ENCODE measurements at regions of chr10 and their contacts with region 1.

Region 1: DNA sequence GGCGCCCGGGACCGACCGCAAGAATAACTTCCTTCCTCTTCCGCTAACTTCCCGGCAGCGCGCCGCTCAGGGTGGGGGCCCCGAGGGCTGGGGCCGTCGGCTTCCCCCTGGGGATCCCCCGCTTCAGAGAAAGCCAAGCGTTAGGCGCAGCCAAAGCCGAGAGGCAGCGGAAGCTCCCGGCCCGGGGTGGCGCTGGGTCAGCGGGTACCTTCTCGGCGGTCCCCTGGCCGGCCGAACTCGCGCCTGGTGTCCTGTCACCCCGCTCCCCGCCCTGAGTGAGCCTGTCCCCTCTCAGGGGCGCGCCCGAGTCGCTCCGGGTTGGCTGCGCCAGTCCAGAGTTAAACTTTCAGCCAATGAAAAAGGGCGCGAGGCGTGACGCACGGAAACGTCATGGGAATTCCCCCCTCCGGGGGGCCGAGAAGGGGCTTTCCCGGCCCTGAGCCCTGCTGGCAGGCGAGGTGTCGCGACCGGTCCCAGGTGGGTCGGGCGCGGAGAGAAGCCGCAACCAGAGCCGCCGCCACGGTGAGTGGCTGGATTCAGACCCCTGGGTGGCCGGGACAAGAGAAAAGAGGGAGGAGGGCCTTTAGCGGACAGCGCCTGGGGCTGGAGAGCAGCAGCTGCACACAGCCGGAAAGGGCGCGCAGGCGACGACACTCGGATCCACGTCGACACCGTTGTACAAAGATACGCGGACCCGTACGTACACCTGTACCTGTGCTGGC is 1.3 kb upstream of the NFKB2 start:
- DNase-seq: peak; percentile 93
- H3K4me3 ChIP-seq: peak overlapping the region; percentile 4 to 60 (median 53)
- H3K27ac ChIP-seq: peak overlapping the region; percentile 87
- H3K4me1 ChIP-seq: peaks cover 14% of the 10 kb centered on the region
- H3K27me3 ChIP-seq: peaks cover 6% of the 10 kb centered on the region in 2 experiments
- CTCF ChIP-seq: no peak
- POLR2A ChIP-seq: no peak

Region 2: GRCh38 chr10:102101152-102101551 is 293.1 kb before region 1 on chr10:
- CTCF ChIA-PET with region 1: no interaction called
- POLR2A ChIA-PET with region 1: no interaction called
- dilution Hi-C with region 1: no loop called
- intact Hi-C with region 1: no loop called
- DNase-seq: no peak
- H3K4me3 ChIP-seq: no peak overlapping the region
- H3K27ac ChIP-seq: no peak overlapping the region
- H3K4me1 ChIP-seq: peaks cover 9% of the 10 kb centered on the region
- H3K27me3 ChIP-seq: no peaks in the 10 kb centered on the region
- CTCF ChIP-seq: no peak
- POLR2A ChIP-seq: no peak

Region 3: GRCh38 chr10:102151774-102152544 is 242.3 kb before region 1 on chr10 and contains the start of gene NOLC1:
- CTCF ChIA-PET with region 1: interaction called, 3 read pairs
- POLR2A ChIA-PET with region 1: no interaction called
- dilution Hi-C with region 1: no loop called
- intact Hi-C with region 1: loop called (anchors 1 kb)
- DNase-seq: peak; percentile 99
- H3K4me3 ChIP-seq: peak within 1 kb of the TSS; percentile 24 to 71 (median 66)
- H3K27ac ChIP-seq: peak within 1 kb of the TSS; percentile 80
- H3K4me1 ChIP-seq: peaks cover 17% of the 10 kb centered on the region
- H3K27me3 ChIP-seq: no peaks in the 10 kb centered on the region
- CTCF ChIP-seq: no peak
- POLR2A ChIP-seq: peak; percentile 97
- total RNA-seq, gene NOLC1: 68.2 and 73.1 TPM in 2 replicates

Region 4: DNA sequence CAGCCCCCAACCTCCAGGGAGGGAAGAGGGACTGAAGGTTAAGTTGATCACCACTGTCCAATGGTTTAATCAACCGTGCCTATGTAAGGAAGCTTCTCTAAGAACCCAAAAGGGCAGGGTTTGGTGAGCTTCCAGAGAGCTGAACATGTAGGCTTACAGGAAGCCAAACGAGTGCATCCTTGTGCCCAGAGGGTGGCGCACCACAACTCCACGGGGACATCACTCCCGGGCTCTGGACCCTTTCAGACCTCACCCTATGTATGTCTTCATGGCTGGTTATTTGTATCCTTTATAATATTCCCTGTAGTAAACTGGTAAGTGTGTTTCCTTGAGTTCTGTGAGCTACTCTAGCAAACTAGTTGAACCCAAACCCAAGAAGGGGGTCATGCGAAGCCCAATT is 10.2 kb before region 1 on chr10:
- CTCF ChIA-PET with region 1: interaction called, 30 read pairs
- POLR2A ChIA-PET with region 1: interaction called, 3 read pairs
- dilution Hi-C with region 1: no loop called
- intact Hi-C with region 1: no loop called
- DNase-seq: no peak
- H3K4me3 ChIP-seq: no peak overlapping the region
- H3K27ac ChIP-seq: no peak overlapping the region
- H3K4me1 ChIP-seq: no peaks in the 10 kb centered on the region
- H3K27me3 ChIP-seq: no peaks in the 10 kb centered on the region
- CTCF ChIP-seq: peak in 1 of 2 donors; percentile 7
- POLR2A ChIP-seq: no peak

Region 5: GRCh38 chr10:102484021-102484420 is 89.8 kb after region 1 on chr10:
- CTCF ChIA-PET with region 1: interaction called, 23 read pairs
- POLR2A ChIA-PET with region 1: no interaction called
- dilution Hi-C with region 1: no loop called
- intact Hi-C with region 1: loop called (anchors 1 kb)
- DNase-seq: no peak
- H3K4me3 ChIP-seq: no peak overlapping the region
- H3K27ac ChIP-seq: no peak overlapping the region
- H3K4me1 ChIP-seq: no peaks in the 10 kb centered on the region
- H3K27me3 ChIP-seq: no peaks in the 10 kb centered on the region
- CTCF ChIP-seq: no peak
- POLR2A ChIP-seq: no peak

Region 6: GRCh38 chr10:102713814-102714620 is 319.8 kb after region 1 on chr10 and contains the start of gene ARL3:
- CTCF ChIA-PET with region 1: no interaction called
- POLR2A ChIA-PET with region 1: no interaction called
- dilution Hi-C with region 1: no loop called
- intact Hi-C with region 1: loop called (anchors 2 kb)
- DNase-seq: peak; percentile 99
- H3K4me3 ChIP-seq: peak within 1 kb of the TSS; percentile 64 to 85 (median 85)
- H3K27ac ChIP-seq: peak within 1 kb of the TSS; percentile 38
- H3K4me1 ChIP-seq: peaks cover 23% of the 10 kb centered on the region
- H3K27me3 ChIP-seq: no peaks in the 10 kb centered on the region
- CTCF ChIP-seq: peak; percentile 39 to 78
- POLR2A ChIP-seq: peak; percentile 76
- total RNA-seq, gene ARL3: 10.6 and 11.0 TPM in 2 replicates

Measured in endothelial cell of umbilical vein (primary cell).